Right ventricle myocardium inferior (tissue), 1 donor: ENCODE measurements at regions of chr6 and their contacts with region 1.

Region 1: GRCh38 chr6:36027501-36028087 is at the start of gene MAPK14:
- DNase-seq: peak; percentile 100
- ATAC-seq: peak; percentile 96
- total RNA-seq, gene MAPK14: 27.1 TPM

Region 2: GRCh38 chr6:35948725-35949124 is 78.9 kb before region 1 on chr6:
- intact Hi-C with region 1: no loop called
- DNase-seq: no peak
- ATAC-seq: no peak

Region 3: DNA sequence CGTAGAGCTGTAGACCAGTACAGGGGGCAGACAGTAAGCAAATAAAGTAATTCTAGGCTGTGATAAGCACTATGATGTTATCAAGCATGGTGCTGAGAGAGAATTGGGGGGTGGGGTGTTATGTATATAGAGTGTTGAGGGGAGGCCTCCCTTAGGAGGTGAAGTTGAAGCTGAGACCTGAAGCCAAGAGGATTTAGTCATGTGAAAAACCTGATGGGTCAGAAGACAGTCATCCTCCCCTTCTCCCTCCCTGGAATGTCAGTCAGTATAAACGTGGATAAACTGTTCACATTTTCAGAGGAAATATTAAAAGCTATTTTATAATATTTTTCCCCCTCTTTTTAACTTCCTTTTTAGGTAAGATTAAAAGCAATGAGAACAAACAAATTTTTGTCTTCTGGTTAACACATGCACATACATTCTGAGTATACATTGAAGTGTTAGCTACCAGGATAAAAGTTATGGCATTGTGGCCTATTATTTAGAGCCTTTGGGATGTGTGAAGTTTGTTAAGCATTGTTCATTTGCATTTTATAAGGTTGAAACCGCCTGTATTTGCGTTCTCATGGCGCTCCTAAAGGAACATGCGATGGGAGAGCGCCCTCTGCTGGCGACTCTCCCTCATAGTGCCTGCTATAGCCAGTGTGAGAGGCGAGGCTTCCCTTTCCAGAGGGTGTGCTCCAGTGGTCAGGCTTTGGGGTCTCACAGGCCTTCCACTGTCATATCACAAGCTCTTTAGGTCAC is 67.3 kb after region 1 on chr6:
- intact Hi-C with region 1: loop called (anchors 1 kb)
- DNase-seq: peak; percentile 91
- ATAC-seq: peak; percentile 92

Region 4: DNA sequence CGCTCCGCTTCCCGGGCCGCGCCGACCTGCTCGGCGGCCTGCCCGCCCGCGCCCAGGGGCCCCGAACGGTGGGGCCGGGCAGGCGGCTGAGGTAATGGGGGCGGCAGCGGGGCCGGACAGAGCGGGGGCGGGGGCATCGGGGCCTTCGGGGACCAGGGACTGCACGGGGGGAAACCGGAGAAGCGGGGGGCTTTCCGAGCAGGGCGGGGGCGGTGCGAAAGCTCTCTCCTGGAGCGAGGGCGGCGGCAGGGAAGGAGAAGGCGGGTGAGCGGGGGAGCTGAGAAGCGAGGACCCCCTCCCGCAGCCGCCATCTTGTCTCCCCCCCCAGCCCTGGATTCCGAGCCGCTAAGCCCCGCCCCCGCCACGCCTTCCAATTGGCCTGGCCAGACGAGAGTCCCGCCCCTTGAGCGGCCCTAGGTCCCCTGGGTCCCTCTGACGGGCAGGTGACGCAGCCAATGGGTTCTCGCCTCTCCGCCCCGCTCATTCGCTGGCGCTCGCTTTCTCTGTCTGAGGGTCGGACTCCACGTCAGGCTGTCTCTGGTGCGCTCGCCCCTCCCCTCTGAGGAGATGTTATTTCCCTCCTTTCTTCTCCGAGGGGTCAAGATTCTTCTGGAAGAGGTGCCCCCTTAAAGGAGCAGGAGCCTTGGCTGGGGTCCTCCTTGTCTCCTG is 169.4 kb after region 1 on chr6:
- intact Hi-C with region 1: loop called (anchors 1 kb)
- DNase-seq: peak; percentile 99
- ATAC-seq: peak; percentile 98